ENCODE measurements at regions of chr1 and their contacts with region 1.

Region 1: GRCh38 chr1:26035959-26036755 is 9.8 kb downstream of the SLC30A2 start:
- DNase-seq: peak; percentile 26
- ATAC-seq: peak; percentile 85
- H3K4me3 ChIP-seq: peak overlapping the region; percentile 91 to 98
- H3K27ac ChIP-seq: peak overlapping the region; percentile 73; the same call in 1 of the 2 replicates
- H3K4me1 ChIP-seq: peaks cover 11 to 27% of the 10 kb centered on the region in 2 experiments
- H3K27me3 ChIP-seq: no peaks in the 10 kb centered on the region
- CTCF ChIP-seq: peak; percentile 86 to 98 (median 96)
- POLR2A ChIP-seq: no peak
- RAD21 ChIP-seq: peak; percentile 95

Region 2: GRCh38 chr1:26111530-26112406 is 75.6 kb after region 1 on chr1 and contains the start of gene PDIK1L:
- CTCF ChIA-PET with region 1: interaction called, 5 read pairs
- POLR2A ChIA-PET with region 1: no interaction called
- RAD21 ChIA-PET with region 1: interaction called in 1 of 2 experiments, 5 read pairs
- intact Hi-C with region 1: loop called (anchors 2 kb)
- DNase-seq: peak; percentile 93
- ATAC-seq: peak; percentile 84
- H3K4me3 ChIP-seq: peak within 1 kb of the TSS; percentile 94 to 98
- H3K27ac ChIP-seq: peak within 1 kb of the TSS; percentile 89
- H3K4me1 ChIP-seq: peaks cover 14 to 21% of the 10 kb centered on the region in 2 experiments
- H3K27me3 ChIP-seq: no peaks in the 10 kb centered on the region
- CTCF ChIP-seq: no peak
- POLR2A ChIP-seq: peak; percentile 43
- RAD21 ChIP-seq: no peak
- total RNA-seq, gene PDIK1L: 8.8 TPM

Region 3: GRCh38 chr1:26169669-26170471 is 133.7 kb after region 1 on chr1 and contains the start of gene ZNF593:
- CTCF ChIA-PET with region 1: interaction called, 7 read pairs
- POLR2A ChIA-PET with region 1: no interaction called
- RAD21 ChIA-PET with region 1: no interaction called
- intact Hi-C with region 1: loop called (anchors 5 kb)
- DNase-seq: peak; percentile 86
- ATAC-seq: peak; percentile 92
- H3K4me3 ChIP-seq: peak within 1 kb of the TSS; percentile 89 to 96
- H3K27ac ChIP-seq: peak within 1 kb of the TSS; percentile 74
- H3K4me1 ChIP-seq: peaks cover 4 to 22% of the 10 kb centered on the region in 2 experiments; a peak in 3 of 4 replicates
- H3K27me3 ChIP-seq: no peaks in the 10 kb centered on the region
- CTCF ChIP-seq: peak; percentile 80 to 84 (median 81)
- POLR2A ChIP-seq: no peak
- RAD21 ChIP-seq: peak; percentile 59
- total RNA-seq, gene ZNF593: 62.4 TPM

Region 4: GRCh38 chr1:26321315-26322041 is 285.3 kb after region 1 on chr1:
- CTCF ChIA-PET with region 1: no interaction called
- POLR2A ChIA-PET with region 1: no interaction called
- RAD21 ChIA-PET with region 1: no interaction called
- intact Hi-C with region 1: loop called (anchors 1 kb)
- DNase-seq: peak; percentile 54
- ATAC-seq: peak; percentile 97
- H3K4me3 ChIP-seq: no peak overlapping the region
- H3K27ac ChIP-seq: no peak overlapping the region
- H3K4me1 ChIP-seq: peaks cover 5 to 16% of the 10 kb centered on the region in 2 experiments; a peak in 3 of 4 replicates
- H3K27me3 ChIP-seq: no peaks in the 10 kb centered on the region
- CTCF ChIP-seq: peak; percentile 83 to 93 (median 92)
- POLR2A ChIP-seq: no peak
- RAD21 ChIP-seq: peak; percentile 97

Region 5: DNA sequence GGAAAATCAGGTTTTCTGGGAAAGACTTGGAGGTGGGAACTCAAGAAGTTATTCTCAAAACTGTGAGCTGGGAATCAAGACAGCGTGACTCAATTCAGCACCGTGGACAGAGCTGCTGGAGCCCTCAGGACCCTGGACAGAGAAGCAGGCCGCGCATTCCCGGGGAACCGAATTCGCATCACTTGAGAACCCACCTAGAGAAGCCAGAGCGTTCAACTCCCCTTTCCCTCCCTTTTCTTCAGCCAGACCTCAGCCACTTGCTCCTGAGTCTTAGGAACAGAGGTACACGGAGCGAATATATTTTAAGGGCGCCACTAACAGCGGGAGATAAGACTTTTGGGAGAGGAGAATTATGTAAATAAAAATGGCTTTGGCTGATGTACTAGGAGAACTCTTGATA is 372.4 kb after region 1 on chr1:
- CTCF ChIA-PET with region 1: no interaction called
- POLR2A ChIA-PET with region 1: no interaction called
- RAD21 ChIA-PET with region 1: no interaction called
- intact Hi-C with region 1: no loop called
- DNase-seq: no peak
- ATAC-seq: peak; percentile 73
- H3K4me3 ChIP-seq: no peak overlapping the region
- H3K27ac ChIP-seq: no peak overlapping the region
- H3K4me1 ChIP-seq: peaks cover 0 to 19% of the 10 kb centered on the region in 2 experiments; a peak in 3 of 4 replicates
- H3K27me3 ChIP-seq: no peaks in the 10 kb centered on the region; the same call in 1 of the 2 replicates
- CTCF ChIP-seq: no peak
- POLR2A ChIP-seq: no peak
- RAD21 ChIP-seq: no peak

Measured in HCT116 (cell line).